Endothelial cell of umbilical vein (primary cell): ENCODE measurements at regions of chr19 and their contacts with region 1.

Region 1: GRCh38 chr19:11293433-11294389 is 2.2 kb upstream of the TSPAN16 start:
- DNase-seq: peak; percentile 94
- H3K4me3 ChIP-seq: peak overlapping the region in 1 of 3 experiments; percentile 17
- H3K27ac ChIP-seq: no peak overlapping the region
- H3K4me1 ChIP-seq: no peaks in the 10 kb centered on the region
- H3K27me3 ChIP-seq: peaks cover 0 to under 1% of the 10 kb centered on the region in 2 experiments
- CTCF ChIP-seq: peak; percentile 97 to 99
- POLR2A ChIP-seq: peak; percentile 51

Region 2: GRCh38 chr19:11324079-11324661 is 30.5 kb after region 1 on chr19:
- CTCF ChIA-PET with region 1: interaction called, 10 read pairs
- POLR2A ChIA-PET with region 1: interaction called, 4 read pairs
- dilution Hi-C with region 1: no loop called
- intact Hi-C with region 1: no loop called
- DNase-seq: peak; percentile 70
- H3K4me3 ChIP-seq: no peak overlapping the region
- H3K27ac ChIP-seq: no peak overlapping the region
- H3K4me1 ChIP-seq: peaks cover 7% of the 10 kb centered on the region
- H3K27me3 ChIP-seq: no peaks in the 10 kb centered on the region
- CTCF ChIP-seq: no peak
- POLR2A ChIP-seq: no peak

Region 3: GRCh38 chr19:11346092-11346940 is 52.6 kb after region 1 on chr19 and contains the starts of genes CCDC159 and TMEM205:
- CTCF ChIA-PET with region 1: interaction called, 14 read pairs
- POLR2A ChIA-PET with region 1: no interaction called
- dilution Hi-C with region 1: no loop called
- intact Hi-C with region 1: loop called (anchors 1 kb)
- DNase-seq: peak; percentile 99
- H3K4me3 ChIP-seq: peak within 1 kb of the TSS; percentile 36 to 93 (median 72)
- H3K27ac ChIP-seq: peak within 1 kb of the TSS; percentile 48
- H3K4me1 ChIP-seq: peaks cover 21% of the 10 kb centered on the region
- H3K27me3 ChIP-seq: no peaks in the 10 kb centered on the region
- CTCF ChIP-seq: no peak
- POLR2A ChIP-seq: peak; percentile 79
- total RNA-seq, gene CCDC159: 30.3 and 31.6 TPM in 2 replicates
- total RNA-seq, gene TMEM205: 57.3 and 58.9 TPM in 2 replicates

Region 4: GRCh38 chr19:11380653-11381534 is 87.2 kb after region 1 on chr19:
- CTCF ChIA-PET with region 1: interaction called, 55 read pairs
- POLR2A ChIA-PET with region 1: interaction called, 3 read pairs
- dilution Hi-C with region 1: no loop called
- intact Hi-C with region 1: loop called (anchors 1 kb)
- DNase-seq: peak; percentile 95
- H3K4me3 ChIP-seq: peak overlapping the region; percentile 47 to 61 (median 47)
- H3K27ac ChIP-seq: peak overlapping the region; percentile 66
- H3K4me1 ChIP-seq: peaks cover 44% of the 10 kb centered on the region
- H3K27me3 ChIP-seq: no peaks in the 10 kb centered on the region
- CTCF ChIP-seq: peak; percentile 71 to 86
- POLR2A ChIP-seq: peak; percentile 36

Region 5: DNA sequence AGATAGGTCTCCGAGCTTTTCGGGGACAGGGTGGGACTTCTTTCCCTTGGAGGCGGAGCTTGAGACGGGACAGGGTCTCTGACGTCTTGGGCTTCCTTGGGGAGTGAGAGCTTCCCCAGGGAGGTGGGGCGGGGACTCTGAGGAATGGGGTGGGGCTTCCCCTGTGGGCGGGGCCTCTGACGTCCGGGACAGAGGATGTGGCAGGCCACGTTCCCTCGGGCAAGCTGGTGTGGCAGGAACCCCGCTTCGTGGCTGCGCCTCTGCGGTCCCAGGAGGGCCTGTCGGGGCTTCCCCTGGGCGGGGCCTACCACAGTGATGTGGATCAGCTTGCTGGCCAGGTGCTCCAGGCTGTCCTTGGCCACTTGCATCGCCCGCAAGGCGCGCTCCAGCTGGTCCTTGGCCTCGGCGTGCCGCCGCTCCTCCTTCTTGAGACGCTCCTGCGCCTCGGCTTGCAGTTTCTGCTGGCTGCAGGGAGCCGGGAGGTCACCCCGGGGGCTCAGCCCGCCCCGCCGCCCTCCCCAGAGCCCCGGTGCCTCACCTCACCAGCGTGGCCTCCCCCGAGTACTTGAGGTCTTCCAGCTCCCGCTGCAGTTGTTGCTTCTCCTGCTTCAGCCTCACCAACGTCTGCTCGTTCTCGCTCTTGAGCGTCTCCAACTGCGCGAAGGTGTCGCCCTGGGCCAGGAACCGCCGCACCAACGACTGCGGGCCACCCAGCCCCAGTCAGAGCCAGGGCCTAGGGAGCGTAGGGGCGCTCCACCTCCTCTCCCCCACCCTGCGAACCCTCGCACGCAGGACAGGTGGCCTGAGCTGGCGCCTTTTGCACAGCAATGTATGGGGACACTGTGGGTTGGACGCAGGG is 128.7 kb after region 1 on chr19:
- CTCF ChIA-PET with region 1: interaction called, 10 read pairs
- POLR2A ChIA-PET with region 1: no interaction called
- dilution Hi-C with region 1: no loop called
- intact Hi-C with region 1: no loop called
- DNase-seq: peak; percentile 25
- H3K4me3 ChIP-seq: no peak overlapping the region
- H3K27ac ChIP-seq: no peak overlapping the region
- H3K4me1 ChIP-seq: peaks cover 9% of the 10 kb centered on the region
- H3K27me3 ChIP-seq: peaks cover 36 to 39% of the 10 kb centered on the region in 2 experiments
- CTCF ChIP-seq: no peak
- POLR2A ChIP-seq: no peak

Region 6: GRCh38 chr19:11446652-11447301 is 153.1 kb after region 1 on chr19:
- CTCF ChIA-PET with region 1: interaction called, 51 read pairs
- POLR2A ChIA-PET with region 1: no interaction called
- dilution Hi-C with region 1: no loop called
- intact Hi-C with region 1: loop called (anchors 1 kb)
- DNase-seq: peak; percentile 21
- H3K4me3 ChIP-seq: no peak overlapping the region
- H3K27ac ChIP-seq: no peak overlapping the region
- H3K4me1 ChIP-seq: no peaks in the 10 kb centered on the region
- H3K27me3 ChIP-seq: no peaks in the 10 kb centered on the region
- CTCF ChIP-seq: peak; percentile 74 to 78
- POLR2A ChIP-seq: no peak

Region 7: DNA sequence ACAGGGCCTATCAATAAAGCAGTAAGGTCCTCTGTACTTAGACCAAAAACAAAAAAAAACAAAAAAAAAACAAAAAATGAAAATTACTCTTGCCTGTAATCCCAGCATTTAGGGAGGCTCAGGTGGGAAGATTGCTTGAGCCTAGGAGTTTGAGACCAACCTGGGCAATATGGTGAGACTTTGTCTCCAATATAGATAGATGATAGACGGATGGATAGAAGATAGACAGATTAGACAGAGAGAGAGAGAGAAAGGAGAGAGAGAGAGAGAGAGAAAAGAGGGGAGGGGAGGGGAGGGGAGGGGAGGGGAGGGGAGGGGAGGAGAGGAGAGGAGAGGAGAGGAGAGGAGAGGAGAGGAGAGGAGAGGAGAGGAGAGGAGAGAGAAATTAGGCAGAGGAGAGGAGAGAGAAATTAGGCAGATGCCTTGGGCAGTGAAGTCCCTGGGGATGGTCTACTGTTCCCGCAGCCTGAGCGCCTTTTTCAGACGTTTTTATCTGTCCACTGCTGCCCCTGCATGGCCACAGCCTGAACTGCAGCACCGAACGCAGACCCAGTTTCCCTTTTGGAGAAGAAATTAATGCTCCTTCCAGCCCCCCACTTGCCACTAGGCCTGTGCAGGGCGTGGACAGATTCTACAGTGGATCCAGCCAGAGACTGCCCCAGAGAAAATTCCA is 293.7 kb after region 1 on chr19:
- CTCF ChIA-PET with region 1: interaction called, 6 read pairs
- POLR2A ChIA-PET with region 1: no interaction called
- dilution Hi-C with region 1: no loop called
- intact Hi-C with region 1: loop called (anchors 1 kb)
- DNase-seq: peak; percentile 65
- H3K4me3 ChIP-seq: no peak overlapping the region
- H3K27ac ChIP-seq: no peak overlapping the region
- H3K4me1 ChIP-seq: no peaks in the 10 kb centered on the region
- H3K27me3 ChIP-seq: no peaks in the 10 kb centered on the region
- CTCF ChIP-seq: peak; percentile 87 to 91
- POLR2A ChIP-seq: no peak